Activated naive CD4-positive, alpha-beta T cell treated with anti-CD3 and anti-CD28 coated beads for 36 hours (primary cell): ENCODE measurements at regions of chr2 and their contacts with region 1.

Region 1: GRCh38 chr2:27903649-27904404 is 13.3 kb downstream of the BABAM2 start:
- DNase-seq: no peak
- H3K4me3 Mint-ChIP-seq: no peak overlapping the region
- H3K27ac Mint-ChIP-seq: no peak overlapping the region
- H3K4me1 Mint-ChIP-seq: peaks cover 52% of the 10 kb centered on the region
- H3K27me3 Mint-ChIP-seq: no peaks in the 10 kb centered on the region

Region 2: GRCh38 chr2:27638037-27638637 is 265.7 kb before region 1 on chr2:
- CTCF ChIA-PET with region 1: no interaction called
- intact Hi-C with region 1: loop called (anchors 1 kb)
- DNase-seq: peak; percentile 17
- H3K4me3 Mint-ChIP-seq: peak overlapping the region; percentile 28
- H3K27ac Mint-ChIP-seq: peak overlapping the region; percentile 92
- H3K4me1 Mint-ChIP-seq: peaks cover 20% of the 10 kb centered on the region
- H3K27me3 Mint-ChIP-seq: no peaks in the 10 kb centered on the region

Region 3: DNA sequence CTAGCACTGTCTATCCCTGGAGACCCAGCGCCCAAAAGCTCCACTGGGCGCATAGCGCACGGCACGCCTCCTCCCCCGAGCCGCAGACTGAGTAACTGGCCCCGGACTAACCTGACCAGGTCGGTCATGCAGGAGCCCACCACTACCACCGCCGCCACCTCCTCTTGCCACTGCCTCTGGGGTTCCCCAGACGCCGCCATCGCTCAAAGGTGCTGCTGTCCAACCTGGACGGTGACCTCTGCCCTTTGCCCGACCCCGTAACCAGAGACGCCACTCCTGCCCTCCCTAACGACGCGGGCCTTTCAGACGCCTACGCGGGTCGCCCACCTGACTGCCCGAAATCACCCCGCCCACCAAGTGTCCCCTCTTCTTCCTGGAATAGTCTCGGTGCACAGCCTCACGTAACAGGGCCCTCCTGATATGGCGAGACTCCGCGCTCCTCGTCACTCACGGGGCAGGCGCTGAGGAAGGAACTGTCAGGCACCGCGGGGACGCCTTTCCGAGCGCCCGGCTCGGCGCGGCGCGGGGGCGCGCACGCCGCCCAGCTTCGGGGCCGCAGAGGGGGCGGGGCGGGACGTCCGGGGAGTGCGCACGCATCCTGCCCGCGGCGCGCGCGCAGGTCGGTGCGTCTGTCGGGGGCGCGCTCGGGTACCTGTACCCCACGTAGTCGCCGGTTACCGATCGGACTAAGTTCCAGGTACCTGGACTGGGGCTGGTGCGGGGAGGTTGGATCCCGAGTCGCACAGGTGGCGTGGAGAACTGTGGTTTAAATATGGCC is 13.5 kb before region 1 on chr2 and contains the starts of genes BABAM2 and RBKS:
- CTCF ChIA-PET with region 1: no interaction called
- intact Hi-C with region 1: loop called (anchors 1 kb)
- DNase-seq: peak; percentile 88
- H3K4me3 Mint-ChIP-seq: peak within 1 kb of the TSS; percentile 96
- H3K27ac Mint-ChIP-seq: peak within 1 kb of the TSS; percentile 97
- H3K4me1 Mint-ChIP-seq: peaks cover 47% of the 10 kb centered on the region
- H3K27me3 Mint-ChIP-seq: no peaks in the 10 kb centered on the region
- total RNA-seq, gene BABAM2: 41.8 to 47.2 TPM
- total RNA-seq, gene RBKS: 1.1 to 1.2 TPM

Region 4: DNA sequence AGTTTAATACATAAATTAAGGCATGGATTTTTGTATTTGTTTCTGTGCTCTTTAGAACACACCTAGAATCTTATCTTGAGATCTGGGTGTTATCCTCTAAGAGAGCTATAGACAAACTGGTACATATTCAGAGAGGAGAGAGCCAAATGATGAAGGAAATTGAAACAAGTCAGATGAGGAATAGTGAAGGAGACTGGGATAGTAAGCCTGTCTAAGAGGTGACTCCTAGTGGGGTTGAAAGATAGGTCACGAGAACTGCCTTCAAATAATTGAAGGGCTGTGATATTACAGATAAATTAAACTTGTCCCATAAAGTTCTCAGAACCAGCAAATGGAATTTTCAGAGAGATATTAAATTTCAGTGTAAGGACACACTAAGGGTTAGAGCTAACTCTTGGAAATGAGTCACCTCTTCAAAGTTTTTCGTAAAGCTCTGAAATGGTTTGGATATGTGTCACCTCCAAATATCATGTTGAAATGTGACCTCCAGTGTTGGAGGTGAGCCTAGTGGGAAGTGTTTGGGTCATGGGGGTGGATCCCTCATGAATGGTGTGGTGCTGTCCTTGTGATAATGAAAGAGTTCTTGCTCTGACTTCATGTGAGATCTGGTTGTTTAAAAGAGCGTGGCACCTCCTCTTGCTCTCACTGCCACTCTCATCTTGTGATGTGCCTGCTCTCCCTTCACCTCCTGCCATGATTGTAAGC is 73.9 kb after region 1 on chr2:
- CTCF ChIA-PET with region 1: no interaction called
- intact Hi-C with region 1: loop called (anchors 5 kb)
- DNase-seq: peak; percentile 56
- H3K4me3 Mint-ChIP-seq: no peak overlapping the region
- H3K27ac Mint-ChIP-seq: peak overlapping the region; percentile 25
- H3K4me1 Mint-ChIP-seq: peaks cover 24% of the 10 kb centered on the region
- H3K27me3 Mint-ChIP-seq: no peaks in the 10 kb centered on the region

Region 5: DNA sequence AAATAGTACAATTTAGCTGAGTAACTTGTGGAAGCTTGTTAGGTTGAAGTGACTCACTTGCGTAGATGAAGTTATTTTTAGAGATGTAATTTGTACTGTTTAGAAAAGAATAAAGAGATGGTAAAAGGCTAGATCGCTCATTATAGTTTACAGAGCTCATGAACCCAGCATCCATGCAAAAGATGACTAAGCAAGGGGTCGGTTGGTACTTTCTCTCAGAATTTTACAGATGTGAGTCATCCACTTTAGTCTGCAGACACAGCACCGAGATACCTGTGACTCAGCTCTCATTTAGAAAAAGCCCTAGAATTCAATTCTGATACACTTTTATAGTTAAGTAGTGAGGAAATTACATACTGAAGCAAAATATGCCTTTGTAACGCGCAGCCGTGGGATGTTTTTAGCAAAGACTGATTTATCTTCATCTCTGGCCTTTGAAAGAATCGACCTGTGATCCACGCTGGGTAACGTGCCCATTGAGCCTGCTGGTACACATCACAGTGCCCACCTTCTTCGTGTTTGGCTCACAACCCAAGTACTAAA is 372.3 kb after region 1 on chr2:
- CTCF ChIA-PET with region 1: no interaction called
- intact Hi-C with region 1: loop called (anchors 2 kb)
- DNase-seq: peak; percentile 56
- H3K4me3 Mint-ChIP-seq: no peak overlapping the region
- H3K27ac Mint-ChIP-seq: peak overlapping the region; percentile 38
- H3K4me1 Mint-ChIP-seq: peaks cover 35% of the 10 kb centered on the region
- H3K27me3 Mint-ChIP-seq: no peaks in the 10 kb centered on the region